ENCODE measurements at regions of chr15 and their contacts with region 1.

Region 1: DNA sequence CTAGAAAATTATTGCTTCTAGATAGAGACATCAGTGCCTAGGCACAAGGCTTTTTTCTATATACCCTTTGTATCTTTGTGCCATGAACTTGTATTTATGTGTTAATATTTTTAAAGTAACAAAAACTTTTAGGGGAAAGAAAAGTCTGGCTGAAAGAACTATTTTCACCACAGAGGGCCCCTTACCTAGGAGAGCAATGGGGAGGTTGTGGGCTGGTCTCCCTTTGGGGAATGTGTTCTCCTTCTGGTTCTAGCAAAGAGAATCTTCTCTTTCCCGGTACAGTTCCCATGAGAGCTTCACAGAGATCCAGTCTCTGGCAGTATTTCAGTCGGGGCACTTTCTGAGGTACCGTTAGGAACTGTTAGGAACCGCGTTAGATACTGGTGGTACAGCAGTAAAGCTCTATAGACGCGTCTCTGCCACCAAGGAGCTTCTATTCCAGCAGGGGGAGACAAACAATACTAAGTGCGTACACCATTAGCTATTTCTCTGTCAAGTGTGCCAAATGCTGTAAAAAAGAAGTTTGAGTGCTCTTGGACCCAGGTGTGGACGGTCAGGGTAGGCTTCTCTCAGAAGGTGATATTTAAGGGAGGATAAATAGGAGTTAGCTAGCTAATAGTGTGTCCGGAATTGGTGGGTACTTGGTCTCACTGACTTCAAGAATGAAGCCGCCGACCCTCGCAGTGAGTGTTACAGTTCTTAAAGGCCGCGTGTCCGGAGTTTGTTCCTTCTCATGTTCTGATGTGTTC is 4.6 kb upstream of the EPB42 start:
- DNase-seq: peak in 1 of 3 donors; percentile 61
- ATAC-seq: peak; percentile 81
- H3K4me3 ChIP-seq: no peak overlapping the region
- H3K4me1 ChIP-seq: no peaks in the 10 kb centered on the region
- CTCF ChIP-seq: no peak

Region 2: GRCh38 chr15:43285609-43286037 is 60.2 kb after region 1 on chr15:
- intact Hi-C with region 1: loop called (anchors 1 to 5 kb)
- DNase-seq: peak in 1 of 3 donors; percentile 81
- ATAC-seq: peak; percentile 90
- H3K4me3 ChIP-seq: no peak overlapping the region
- H3K4me1 ChIP-seq: no peaks in the 10 kb centered on the region
- CTCF ChIP-seq: peak; percentile 47

Region 3: DNA sequence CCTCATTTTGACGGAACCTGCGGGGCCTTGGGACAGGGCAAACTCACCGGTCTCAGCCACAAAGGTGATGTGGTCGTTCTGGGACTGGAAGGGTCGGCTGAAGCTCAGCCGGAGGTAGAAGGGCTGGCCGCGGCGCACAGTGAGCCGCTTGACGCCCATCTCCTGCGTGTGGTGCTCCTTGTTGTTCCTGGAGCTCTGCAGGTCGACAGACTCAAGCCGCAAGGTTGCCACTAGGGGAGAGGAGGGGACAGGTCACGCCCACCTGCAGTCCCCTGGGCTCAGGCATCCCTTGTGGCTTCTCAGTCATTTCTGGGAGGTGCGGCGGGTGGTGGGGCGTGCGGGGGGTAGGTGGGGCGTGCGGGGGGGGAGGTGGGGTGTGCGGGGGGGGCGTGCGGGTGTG is 68.0 kb after region 1 on chr15:
- intact Hi-C with region 1: loop called in 1 of 2 experiments (anchors 5 kb)
- DNase-seq: no peak
- ATAC-seq: no peak
- H3K4me3 ChIP-seq: no peak overlapping the region
- H3K4me1 ChIP-seq: no peaks in the 10 kb centered on the region
- CTCF ChIP-seq: no peak

Measured in mucosa of descending colon (tissue), 3 donors.